Naive thymus-derived CD4-positive, alpha-beta T cell (primary cell): ENCODE measurements at regions of chr1 and their contacts with region 1.

Region 1: DNA sequence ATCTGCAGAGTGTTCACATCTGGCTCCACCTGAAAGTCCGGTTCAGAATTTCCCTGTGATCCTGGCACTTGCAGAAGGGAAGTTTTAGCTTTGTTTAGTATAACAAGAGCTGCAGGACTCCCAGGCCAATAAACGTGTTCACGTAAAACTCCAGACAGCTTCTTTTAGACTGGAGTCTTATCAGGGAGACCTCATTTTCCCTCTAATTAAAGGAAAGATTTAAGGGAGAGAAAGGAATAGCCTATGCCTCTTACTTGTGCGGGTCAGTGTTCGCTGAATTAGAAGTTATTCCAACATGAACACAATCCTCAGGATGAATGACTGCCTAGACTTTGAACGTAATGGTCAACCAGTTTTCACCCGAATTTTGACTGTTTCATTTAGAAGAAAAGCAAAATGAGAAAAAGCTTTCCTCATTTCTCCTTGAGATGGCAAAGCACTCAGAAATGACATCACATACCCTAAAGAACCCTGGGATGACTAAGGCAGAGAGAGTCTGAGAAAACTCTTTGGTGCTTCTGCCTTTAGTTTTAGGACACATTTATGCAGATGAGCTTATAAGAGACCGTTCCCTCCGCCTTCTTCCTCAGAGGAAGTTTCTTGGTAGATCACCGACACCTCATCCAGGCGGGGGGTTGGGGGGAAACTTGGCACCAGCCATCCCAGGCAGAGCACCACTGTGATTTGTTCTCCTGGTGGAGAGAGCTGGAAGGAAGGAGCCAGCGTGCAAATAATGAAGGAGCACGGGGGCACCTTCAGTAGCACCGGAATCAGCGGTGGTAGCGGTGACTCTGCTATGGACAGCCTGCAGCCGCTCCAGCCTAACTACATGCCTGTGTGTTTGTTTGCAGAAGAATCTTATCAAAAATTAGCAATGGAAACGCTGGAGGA is 202.1 kb upstream of the SGIP1 start:
- DNase-seq: peak; percentile 20 to 55 (median 39)
- ATAC-seq: peak; percentile 35
- H3K4me3 ChIP-seq: peak overlapping the region; percentile 86
- H3K4me3 Mint-ChIP-seq: peak overlapping the region; percentile 90 to 99 (median 98)
- H3K27ac ChIP-seq: peak overlapping the region; percentile 92
- H3K27ac Mint-ChIP-seq: peak overlapping the region; percentile 95 to 100 (median 98)
- H3K4me1 ChIP-seq: peaks cover 31 to 36% of the 10 kb centered on the region in 2 donors
- H3K4me1 Mint-ChIP-seq: peaks cover 26 to 76% (median 58%) of the 10 kb centered on the region in 7 donors
- H3K27me3 ChIP-seq: no peaks in the 10 kb centered on the region
- H3K27me3 Mint-ChIP-seq: no peaks in the 10 kb centered on the region

Region 2: DNA sequence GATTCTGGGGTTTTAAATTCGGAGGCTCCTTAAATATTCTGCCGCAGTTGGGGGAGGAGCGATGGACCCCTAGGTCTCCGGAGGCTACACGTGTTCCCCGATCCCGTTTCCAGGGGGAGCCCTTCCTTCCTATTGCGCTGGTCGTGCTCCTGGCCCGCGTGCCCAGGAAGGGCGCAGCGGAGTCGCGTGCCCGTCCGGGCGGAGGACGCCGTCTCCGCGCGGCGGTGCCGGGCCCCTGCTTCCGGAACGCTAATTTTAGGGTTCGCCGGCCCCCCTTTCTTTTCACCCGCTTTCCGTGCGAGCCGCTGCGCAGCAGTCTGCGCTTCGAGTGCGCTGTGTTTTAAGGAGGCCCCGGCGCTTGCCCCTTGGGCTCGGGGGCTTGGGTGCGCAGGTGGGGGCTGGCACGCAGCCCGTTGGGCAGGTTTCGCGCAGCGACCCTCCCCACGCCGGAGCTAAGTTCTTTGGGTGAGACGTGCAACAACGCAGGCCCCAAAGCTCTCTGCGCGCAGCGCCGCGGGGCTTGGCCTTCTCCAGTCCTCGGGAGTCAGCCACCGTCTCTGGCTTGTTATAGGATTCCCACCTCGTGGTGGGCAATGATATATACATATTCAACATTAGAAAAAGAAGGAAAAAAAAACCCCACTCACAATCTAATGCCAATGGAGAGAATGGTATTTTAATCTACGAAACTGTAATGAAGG is 1066.1 kb before region 1 on chr1:
- CTCF ChIA-PET with region 1: no interaction called
- POLR2A ChIA-PET with region 1: no interaction called
- intact Hi-C with region 1: loop called in 1 of 2 experiments (anchors 5 kb)
- DNase-seq: peak; percentile 21 to 60 (median 51)
- ATAC-seq: peak; percentile 76
- H3K4me3 ChIP-seq: peak overlapping the region; percentile 55
- H3K4me3 Mint-ChIP-seq: peak overlapping the region; percentile 51 to 89 (median 82)
- H3K27ac ChIP-seq: peak overlapping the region; percentile 24
- H3K27ac Mint-ChIP-seq: peak overlapping the region in 7 of 9 donors; percentile 49 to 79 (median 72)
- H3K4me1 ChIP-seq: peaks cover 11 to 16% of the 10 kb centered on the region in 2 donors
- H3K4me1 Mint-ChIP-seq: peaks cover 13 to 30% (median 19%) of the 10 kb centered on the region in 7 donors
- H3K27me3 ChIP-seq: no peaks in the 10 kb centered on the region
- H3K27me3 Mint-ChIP-seq: peaks cover 13 to 47% (median 24%) of the 10 kb centered on the region in 5 donors

Region 3: DNA sequence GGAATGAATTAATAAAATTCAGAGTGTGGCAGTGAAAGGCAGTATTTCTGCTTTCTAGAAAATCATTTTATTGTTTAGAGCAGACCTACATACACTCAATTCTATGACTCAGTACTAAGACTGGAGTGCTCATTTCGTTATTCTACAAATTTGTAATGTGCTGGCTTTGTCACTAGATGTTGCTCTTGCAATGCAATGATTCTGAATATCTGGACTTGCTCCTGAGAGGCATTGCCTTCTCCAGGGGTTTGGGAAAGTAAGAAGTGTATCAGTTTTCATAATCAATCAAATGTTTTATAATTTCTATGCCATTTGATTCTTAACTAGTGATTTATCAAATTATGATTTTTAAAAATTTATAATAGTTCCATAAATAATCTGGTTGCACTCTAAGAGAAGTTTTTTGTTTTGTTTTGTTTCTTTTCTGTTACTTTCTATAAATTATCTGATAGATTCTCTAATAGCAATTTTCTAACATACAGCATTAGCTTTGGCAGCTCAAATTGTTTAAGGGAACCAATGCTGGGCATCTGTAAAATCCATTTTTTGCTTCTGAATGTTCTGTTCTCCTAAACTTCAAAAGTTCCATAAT is 78.5 kb before region 1 on chr1:
- CTCF ChIA-PET with region 1: interaction called, 3 read pairs
- POLR2A ChIA-PET with region 1: interaction called, 5 read pairs
- intact Hi-C with region 1: loop called in 1 of 2 experiments (anchors 2 kb)
- DNase-seq: peak in 6 of 9 donors; percentile 29 to 58 (median 46)
- ATAC-seq: peak; percentile 83
- H3K4me3 ChIP-seq: no peak overlapping the region
- H3K4me3 Mint-ChIP-seq: no peak overlapping the region
- H3K27ac ChIP-seq: no peak overlapping the region
- H3K27ac Mint-ChIP-seq: peak overlapping the region in 2 of 9 donors; percentile 19 to 64
- H3K4me1 ChIP-seq: peaks cover 10 to 12% of the 10 kb centered on the region in 2 donors
- H3K4me1 Mint-ChIP-seq: peaks cover 6 to 57% (median 19%) of the 10 kb centered on the region in 7 donors
- H3K27me3 ChIP-seq: no peaks in the 10 kb centered on the region
- H3K27me3 Mint-ChIP-seq: no peaks in the 10 kb centered on the region

Region 4: GRCh38 chr1:66316464-66317247 is 15.2 kb before region 1 on chr1:
- CTCF ChIA-PET with region 1: no interaction called
- POLR2A ChIA-PET with region 1: interaction called, 30 read pairs
- intact Hi-C with region 1: loop called in 1 of 2 experiments (anchors 1 kb)
- DNase-seq: peak in 5 of 9 donors; percentile 5 to 50 (median 31)
- ATAC-seq: peak; percentile 84
- H3K4me3 ChIP-seq: no peak overlapping the region
- H3K4me3 Mint-ChIP-seq: peak overlapping the region in 2 of 10 donors; percentile 5 to 52
- H3K27ac ChIP-seq: no peak overlapping the region
- H3K27ac Mint-ChIP-seq: peak overlapping the region; percentile 10 to 91 (median 42)
- H3K4me1 ChIP-seq: no peaks in the 10 kb centered on the region
- H3K4me1 Mint-ChIP-seq: peaks cover 3 to 15% (median 12%) of the 10 kb centered on the region in 7 donors
- H3K27me3 ChIP-seq: no peaks in the 10 kb centered on the region
- H3K27me3 Mint-ChIP-seq: no peaks in the 10 kb centered on the region

Region 5: DNA sequence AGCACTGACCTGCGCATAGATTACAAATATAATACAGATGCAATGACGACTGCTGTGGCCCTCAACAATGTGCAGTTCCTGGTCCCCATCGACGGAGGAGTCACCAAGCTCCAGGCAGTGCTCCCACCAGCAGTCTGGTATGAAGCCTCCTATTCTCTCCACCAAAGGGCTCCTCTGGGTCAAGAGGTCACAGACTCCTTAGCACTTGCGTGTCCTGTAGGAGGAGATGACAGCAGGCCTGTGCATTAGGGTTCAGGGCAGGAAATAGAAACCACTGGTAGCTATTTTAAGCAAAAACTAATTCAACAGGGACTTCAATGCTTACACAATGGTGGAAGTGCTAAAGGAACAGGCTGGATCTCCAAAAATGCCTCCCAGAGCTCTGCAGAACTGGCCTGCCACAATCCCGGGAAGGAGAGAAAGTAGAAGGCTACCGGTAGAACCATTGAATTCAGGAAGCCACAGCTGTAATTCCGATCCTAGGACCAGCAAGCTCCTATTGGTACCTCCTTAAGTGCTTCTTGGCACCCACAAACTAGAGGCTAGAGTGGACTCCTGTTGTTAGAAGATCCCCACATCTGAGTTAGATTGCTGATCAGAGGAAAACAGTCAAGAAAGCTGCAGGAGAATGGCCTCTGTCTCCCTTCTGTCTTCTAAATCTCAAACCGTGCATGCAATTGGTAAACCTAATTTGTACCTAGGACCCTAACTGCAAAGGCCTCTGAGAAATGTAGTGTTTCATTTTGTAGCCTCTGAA is 407.7 kb after region 1 on chr1:
- CTCF ChIA-PET with region 1: no interaction called
- POLR2A ChIA-PET with region 1: no interaction called
- intact Hi-C with region 1: no loop called
- DNase-seq: no peak
- ATAC-seq: peak; percentile 37
- H3K4me3 ChIP-seq: no peak overlapping the region
- H3K4me3 Mint-ChIP-seq: no peak overlapping the region
- H3K27ac ChIP-seq: no peak overlapping the region
- H3K27ac Mint-ChIP-seq: peak overlapping the region in 2 of 9 donors; percentile 20 to 38
- H3K4me1 ChIP-seq: no peaks in the 10 kb centered on the region
- H3K4me1 Mint-ChIP-seq: peaks cover 0 to 10% (median 7%) of the 10 kb centered on the region in 7 donors
- H3K27me3 ChIP-seq: no peaks in the 10 kb centered on the region
- H3K27me3 Mint-ChIP-seq: peaks cover 0 to 5% (median 0%) of the 10 kb centered on the region in 5 donors

Region 6: GRCh38 chr1:66929999-66930822 is 598.3 kb after region 1 on chr1:
- CTCF ChIA-PET with region 1: no interaction called
- POLR2A ChIA-PET with region 1: no interaction called
- intact Hi-C with region 1: loop called (anchors 5 kb)
- DNase-seq: peak; percentile 88 to 97 (median 92)
- ATAC-seq: peak; percentile 88
- H3K4me3 ChIP-seq: peak overlapping the region; percentile 69
- H3K4me3 Mint-ChIP-seq: peak overlapping the region; percentile 85 to 98 (median 92)
- H3K27ac ChIP-seq: peak overlapping the region; percentile 91
- H3K27ac Mint-ChIP-seq: peak overlapping the region; percentile 79 to 95 (median 90)
- H3K4me1 ChIP-seq: peaks cover 45 to 48% of the 10 kb centered on the region in 2 donors
- H3K4me1 Mint-ChIP-seq: peaks cover 38 to 88% (median 70%) of the 10 kb centered on the region in 7 donors
- H3K27me3 ChIP-seq: no peaks in the 10 kb centered on the region
- H3K27me3 Mint-ChIP-seq: no peaks in the 10 kb centered on the region

Region 7: DNA sequence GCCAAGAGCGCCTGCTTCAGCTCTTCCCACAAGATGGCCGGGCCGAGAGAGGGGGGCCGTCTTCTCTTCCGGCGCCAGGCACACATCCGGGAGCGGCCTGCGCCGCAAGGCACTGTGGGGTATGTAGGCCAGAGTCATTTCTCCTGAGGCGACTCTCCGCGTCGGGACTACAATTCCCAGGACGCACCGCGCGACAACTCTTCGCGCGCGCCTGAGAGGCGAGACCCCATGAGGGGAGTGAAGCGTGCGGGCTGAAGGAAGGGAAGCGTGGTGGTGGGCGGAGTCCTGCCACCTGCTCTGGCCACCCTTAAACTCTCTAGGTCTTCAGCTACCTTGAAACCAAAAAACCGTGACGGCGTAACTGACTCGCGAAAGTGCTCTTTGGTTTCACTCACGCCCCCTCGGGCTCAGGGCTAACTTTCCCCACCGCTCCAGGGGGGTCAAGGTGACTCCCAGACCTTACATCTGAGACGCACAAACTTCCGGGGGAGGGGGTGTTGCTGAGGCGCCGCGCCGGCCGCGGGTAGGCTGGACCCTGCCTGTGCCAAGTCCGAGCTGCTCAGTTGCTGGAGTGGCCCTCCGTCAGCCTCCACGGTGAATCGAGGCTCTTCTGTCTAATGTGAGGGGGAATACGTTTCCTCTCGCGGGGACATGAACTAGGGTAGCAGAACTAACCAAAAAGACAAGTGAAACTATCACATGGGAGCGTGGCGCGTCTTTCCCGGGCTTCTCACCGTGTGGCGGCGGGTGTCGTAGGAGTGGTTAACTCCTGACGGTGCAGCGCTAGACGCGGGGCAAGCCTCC is 1098.7 kb after region 1 on chr1 and contains the start of gene SERBP1:
- CTCF ChIA-PET with region 1: no interaction called
- POLR2A ChIA-PET with region 1: no interaction called
- intact Hi-C with region 1: loop called in 1 of 2 experiments (anchors 10 kb)
- DNase-seq: peak; percentile 86 to 97 (median 94)
- ATAC-seq: peak; percentile 94
- H3K4me3 ChIP-seq: peak within 1 kb of the TSS; percentile 98
- H3K4me3 Mint-ChIP-seq: peak within 1 kb of the TSS; percentile 93 to 99 (median 95)
- H3K27ac ChIP-seq: peak within 1 kb of the TSS; percentile 96
- H3K27ac Mint-ChIP-seq: peak within 1 kb of the TSS; percentile 95 to 99 (median 96)
- H3K4me1 ChIP-seq: peaks cover 5 to 16% of the 10 kb centered on the region in 2 donors
- H3K4me1 Mint-ChIP-seq: peaks cover 28 to 64% (median 57%) of the 10 kb centered on the region in 7 donors
- H3K27me3 ChIP-seq: no peaks in the 10 kb centered on the region
- H3K27me3 Mint-ChIP-seq: no peaks in the 10 kb centered on the region
- total RNA-seq, gene SERBP1: 108 to 282 (median 151) TPM